Left cardiac atrium (tissue), 4 donors: ENCODE measurements at regions of chr12 and their contacts with region 1.

Region 1: GRCh38 chr12:12266873-12267741 is at the start of gene LRP6:
- DNase-seq: peak; percentile 94
- ATAC-seq: peak; percentile 97 to 99
- total RNA-seq, gene LRP6: 20.9 to 30.3 TPM

Region 2: GRCh38 chr12:12171991-12172521 is 95.1 kb before region 1 on chr12:
- intact Hi-C with region 1: loop called in 1 of 2 experiments (anchors 10 kb)
- DNase-seq: no peak
- ATAC-seq: no peak

Region 3: GRCh38 chr12:12201274-12201758 is 65.8 kb before region 1 on chr12:
- intact Hi-C with region 1: loop called in 1 of 2 experiments (anchors 10 kb)
- DNase-seq: no peak
- ATAC-seq: peak; percentile 78 to 84

Region 4: GRCh38 chr12:12356886-12357718 is 90.0 kb after region 1 on chr12 and contains the start of gene BORCS5:
- intact Hi-C with region 1: no loop called
- DNase-seq: peak; percentile 98
- ATAC-seq: peak; percentile 98 to 99
- total RNA-seq, gene BORCS5: 7.4 to 10.5 TPM